Dorsolateral prefrontal cortex (tissue), 120 donors: ENCODE measurements at regions of chr9 and their contacts with region 1.

Region 1: GRCh38 chr9:73183917-73184861 is 32.5 kb downstream of the ANXA1 start:
- DNase-seq: no peak
- H3K4me3 ChIP-seq: no peak overlapping the region
- H3K27ac ChIP-seq: no peak overlapping the region
- H3K27me3 ChIP-seq: no peaks in the 10 kb centered on the region
- CTCF ChIP-seq: peak; percentile 43 to 89 (median 71)

Region 2: GRCh38 chr9:72038890-72039410 is 1145.2 kb before region 1 on chr9:
- intact Hi-C with region 1: loop called in 1 of 2 experiments (anchors 5 kb)
- DNase-seq: peak; percentile 57 to 88 (median 80)
- H3K4me3 ChIP-seq: peak overlapping the region in 1 of 59 donors; percentile 11
- H3K27ac ChIP-seq: peak overlapping the region in 7 of 59 donors; percentile 8 to 71 (median 46)
- H3K27me3 ChIP-seq: no peaks in the 10 kb centered on the region
- CTCF ChIP-seq: peak; percentile 94 to 99 (median 98)

Region 3: GRCh38 chr9:72843520-72844439 is 340.4 kb before region 1 on chr9:
- intact Hi-C with region 1: no loop called
- DNase-seq: peak in 1 of 10 donors; percentile 19
- H3K4me3 ChIP-seq: no peak overlapping the region
- H3K27ac ChIP-seq: no peak overlapping the region
- H3K27me3 ChIP-seq: peaks cover 0 to 4% (median 0%) of the 10 kb centered on the region in 45 donors
- CTCF ChIP-seq: no peak

Region 4: DNA sequence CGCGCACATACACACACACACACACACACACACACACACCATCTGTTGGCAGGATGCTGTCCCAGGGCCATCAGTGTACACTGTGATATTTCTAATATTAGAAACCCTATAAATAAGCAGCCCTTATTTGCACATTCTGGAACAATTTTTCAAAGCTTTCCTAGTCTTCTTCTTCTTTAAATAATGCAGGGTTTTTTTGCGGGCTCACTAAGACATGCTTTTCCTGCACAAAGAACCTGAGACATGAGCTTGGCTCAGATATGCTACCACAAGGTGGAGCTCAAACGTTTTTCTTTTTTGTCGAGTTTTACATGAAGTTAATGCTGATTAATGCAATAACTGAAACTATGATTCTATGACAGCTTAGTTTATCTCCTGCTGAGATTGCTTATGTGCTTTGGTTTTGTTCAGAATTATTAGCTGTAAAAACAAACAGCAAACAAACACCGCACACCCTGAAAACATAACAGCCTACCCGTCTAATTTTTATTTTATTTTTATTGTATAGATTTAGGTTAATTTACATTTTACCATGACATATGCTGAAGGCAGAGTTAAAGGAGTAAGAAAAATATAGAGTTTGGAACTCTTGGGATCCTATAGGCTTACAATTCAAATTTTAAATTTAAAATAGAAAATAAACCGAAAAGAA is 327.1 kb before region 1 on chr9:
- intact Hi-C with region 1: loop called (anchors 10 kb)
- DNase-seq: peak in 2 of 10 donors; percentile 16 to 35
- H3K4me3 ChIP-seq: peak overlapping the region in 3 of 59 donors; percentile 16 to 22 (median 21)
- H3K27ac ChIP-seq: peak overlapping the region in 12 of 59 donors; percentile 7 to 53 (median 24)
- H3K27me3 ChIP-seq: no peaks in the 10 kb centered on the region
- CTCF ChIP-seq: peak; percentile 41 to 84 (median 72)

Region 5: GRCh38 chr9:72864327-72864726 is 319.9 kb before region 1 on chr9:
- intact Hi-C with region 1: loop called (anchors 10 kb)
- DNase-seq: no peak
- H3K4me3 ChIP-seq: no peak overlapping the region
- H3K27ac ChIP-seq: no peak overlapping the region
- H3K27me3 ChIP-seq: no peaks in the 10 kb centered on the region
- CTCF ChIP-seq: no peak

Region 6: DNA sequence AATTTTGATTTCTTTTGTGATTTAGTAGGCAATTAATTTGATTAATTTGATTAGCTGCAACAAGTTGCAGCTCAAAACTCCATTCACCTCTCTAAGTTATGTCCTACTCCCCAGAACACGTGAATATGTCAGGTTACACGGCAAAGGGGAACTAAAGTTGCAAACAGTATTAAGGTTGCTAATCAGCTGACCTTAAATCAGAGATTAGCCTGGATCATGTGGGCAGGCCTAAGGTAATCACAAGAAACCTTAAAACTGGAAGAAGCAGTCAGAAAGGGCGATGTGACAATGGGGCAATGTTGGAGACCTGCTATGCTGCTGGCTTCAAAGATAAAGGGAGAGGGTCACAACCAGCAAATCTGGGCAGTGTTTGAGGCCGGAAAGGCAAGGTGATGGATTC is 79.8 kb before region 1 on chr9:
- intact Hi-C with region 1: loop called (anchors 2 to 5 kb)
- DNase-seq: no peak
- H3K4me3 ChIP-seq: no peak overlapping the region
- H3K27ac ChIP-seq: no peak overlapping the region
- H3K27me3 ChIP-seq: no peaks in the 10 kb centered on the region
- CTCF ChIP-seq: no peak